Tibial artery (tissue), 4 donors: ENCODE measurements at regions of chr10 and their contacts with region 1.

Region 1: DNA sequence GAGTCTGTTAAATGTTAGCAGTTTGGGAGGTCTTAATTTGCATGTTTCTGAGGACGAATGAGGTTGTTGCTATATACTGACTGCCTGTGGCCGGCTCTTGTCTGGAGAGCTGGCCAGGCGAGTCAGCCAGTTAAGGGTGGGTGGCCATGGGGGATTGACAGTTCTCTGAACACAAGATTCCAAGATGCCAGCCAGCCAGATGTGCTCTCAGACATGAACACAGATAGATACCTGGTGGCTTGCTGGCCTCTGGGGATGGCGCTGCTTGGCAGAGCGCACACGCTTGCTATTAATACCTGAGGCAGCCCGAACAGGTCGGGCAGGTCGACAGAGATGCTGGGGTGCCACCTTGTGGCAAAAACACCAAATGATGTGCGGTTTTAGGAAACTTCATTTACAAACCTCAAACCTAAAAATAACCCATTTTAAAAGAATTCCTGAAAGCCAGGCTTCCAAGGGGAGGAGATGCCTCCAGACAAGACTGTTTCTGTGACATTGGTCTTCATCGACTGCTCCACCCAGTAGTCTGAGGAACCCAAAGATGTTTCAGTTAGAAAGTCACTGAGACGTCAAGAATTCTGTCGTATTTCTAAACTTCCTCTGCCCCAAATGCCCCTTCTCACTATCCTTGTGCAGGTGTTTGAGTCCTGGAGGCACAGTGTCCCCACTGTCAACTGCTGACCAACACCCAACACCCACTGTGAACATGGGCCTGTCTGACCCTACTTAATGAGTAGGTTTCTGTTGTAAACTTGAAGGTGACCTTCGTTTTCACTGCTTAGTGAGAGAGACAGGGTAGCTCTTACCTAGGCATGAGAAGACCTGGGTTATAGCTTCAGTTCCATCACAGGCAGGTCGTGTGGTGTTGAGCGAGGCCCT is 123.4 kb downstream of the NT5C2 start:
- DNase-seq: peak in 1 of 2 donors; percentile 76
- H3K4me3 ChIP-seq: no peak overlapping the region
- H3K27ac ChIP-seq: peak overlapping the region; percentile 3 to 20
- H3K4me1 ChIP-seq: peaks cover 0 to 14% (median 4%) of the 10 kb centered on the region in 4 donors
- H3K27me3 ChIP-seq: no peaks in the 10 kb centered on the region
- CTCF ChIP-seq: peak; percentile 62 to 74

Region 2: DNA sequence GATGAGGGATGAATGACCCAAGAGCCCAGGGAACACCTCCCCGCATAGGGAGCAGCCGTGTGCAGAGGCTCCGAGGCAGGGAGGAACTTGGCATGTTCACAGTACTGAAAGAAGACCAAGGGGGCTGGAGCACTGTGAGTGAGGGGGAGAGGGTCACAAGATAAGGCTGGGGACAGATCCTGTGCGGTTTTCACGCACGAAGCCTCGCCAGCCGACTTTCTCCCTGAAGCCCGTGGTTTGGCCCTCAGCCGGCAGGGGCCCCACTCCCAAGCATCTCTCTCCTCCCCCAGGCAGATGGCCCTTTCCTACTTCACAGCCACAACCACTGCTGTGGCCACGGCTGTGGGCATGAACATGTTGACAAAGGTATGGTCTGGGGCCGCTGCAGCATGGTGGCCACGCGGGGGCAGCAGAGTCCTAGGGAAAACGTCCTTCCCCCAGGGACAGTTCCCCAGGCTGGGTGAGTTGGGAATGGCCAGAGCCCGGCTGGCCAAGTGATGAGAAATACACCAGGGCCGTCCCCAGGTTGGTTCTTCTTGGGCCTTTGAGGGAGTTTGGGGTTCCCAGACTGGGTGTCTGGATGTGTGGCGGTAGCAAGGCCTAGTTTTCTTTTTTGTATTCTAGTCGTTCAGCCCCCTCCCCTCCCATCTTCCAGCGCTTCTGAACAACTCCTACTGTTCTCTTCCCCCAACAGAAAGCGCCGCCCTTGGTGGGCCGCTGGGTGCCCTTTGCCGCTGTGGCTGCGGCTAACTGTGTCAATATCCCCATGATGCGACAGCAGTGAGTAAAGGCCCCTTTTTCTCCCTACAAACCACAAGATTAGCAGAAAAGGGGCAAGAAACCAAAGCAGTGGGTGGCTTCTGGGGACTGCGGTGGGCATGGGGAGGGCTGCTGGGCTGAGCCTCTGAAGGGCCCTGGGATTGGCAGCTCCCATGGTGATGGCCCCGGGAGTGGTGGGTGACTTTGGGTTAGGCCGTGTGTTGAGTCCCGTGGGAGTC is 340.4 kb before region 1 on chr10:
- intact Hi-C with region 1: loop called (anchors 10 kb)
- DNase-seq: peak; percentile 88 to 93
- H3K4me3 ChIP-seq: no peak overlapping the region
- H3K27ac ChIP-seq: no peak overlapping the region
- H3K4me1 ChIP-seq: peaks cover 0 to 7% (median 0%) of the 10 kb centered on the region in 4 donors
- H3K27me3 ChIP-seq: no peaks in the 10 kb centered on the region
- CTCF ChIP-seq: peak; percentile 90 to 96

Region 3: DNA sequence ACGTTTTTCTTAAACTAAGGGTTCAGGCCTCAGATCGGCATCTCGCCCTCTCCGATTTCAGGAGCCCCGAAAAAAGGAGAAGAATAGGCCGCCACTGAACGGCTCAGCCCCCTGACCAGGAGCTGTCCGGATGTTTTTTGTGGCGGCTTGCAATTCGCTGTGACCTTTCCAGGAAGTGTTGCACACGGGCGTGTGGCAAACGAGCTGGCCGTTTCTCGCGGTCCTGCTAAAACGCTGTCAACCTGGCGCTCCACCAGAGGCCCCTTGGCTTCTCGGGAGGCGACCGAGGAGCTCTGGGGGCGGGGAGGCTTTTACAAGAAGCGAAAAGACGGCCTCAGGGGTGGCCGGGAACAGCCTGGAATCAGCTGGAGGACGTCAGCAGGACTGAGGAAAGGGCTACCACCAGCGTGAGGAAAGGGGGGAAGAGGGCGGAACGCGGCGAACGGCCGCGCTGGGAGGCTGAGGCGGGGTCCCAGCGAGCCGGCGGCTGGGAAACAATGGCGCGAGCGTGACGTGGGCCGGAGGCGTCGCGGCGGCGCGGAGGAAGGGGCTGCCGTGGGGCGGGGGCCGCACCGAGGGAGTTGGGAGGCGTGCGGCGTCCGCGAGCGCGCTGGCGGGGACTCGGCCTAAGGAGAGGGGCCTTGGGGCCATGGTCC is 122.9 kb after region 1 on chr10:
- intact Hi-C with region 1: loop called (anchors 10 kb)
- DNase-seq: peak; percentile 85 to 92
- H3K4me3 ChIP-seq: peak overlapping the region; percentile 84 to 88
- H3K27ac ChIP-seq: peak overlapping the region; percentile 94 to 99
- H3K4me1 ChIP-seq: peaks cover 0 to 60% (median 34%) of the 10 kb centered on the region in 4 donors
- H3K27me3 ChIP-seq: no peaks in the 10 kb centered on the region
- CTCF ChIP-seq: no peak